Left cardiac atrium (tissue), 4 donors: ENCODE measurements at regions of chr3 and their contacts with region 1.

Region 1: DNA sequence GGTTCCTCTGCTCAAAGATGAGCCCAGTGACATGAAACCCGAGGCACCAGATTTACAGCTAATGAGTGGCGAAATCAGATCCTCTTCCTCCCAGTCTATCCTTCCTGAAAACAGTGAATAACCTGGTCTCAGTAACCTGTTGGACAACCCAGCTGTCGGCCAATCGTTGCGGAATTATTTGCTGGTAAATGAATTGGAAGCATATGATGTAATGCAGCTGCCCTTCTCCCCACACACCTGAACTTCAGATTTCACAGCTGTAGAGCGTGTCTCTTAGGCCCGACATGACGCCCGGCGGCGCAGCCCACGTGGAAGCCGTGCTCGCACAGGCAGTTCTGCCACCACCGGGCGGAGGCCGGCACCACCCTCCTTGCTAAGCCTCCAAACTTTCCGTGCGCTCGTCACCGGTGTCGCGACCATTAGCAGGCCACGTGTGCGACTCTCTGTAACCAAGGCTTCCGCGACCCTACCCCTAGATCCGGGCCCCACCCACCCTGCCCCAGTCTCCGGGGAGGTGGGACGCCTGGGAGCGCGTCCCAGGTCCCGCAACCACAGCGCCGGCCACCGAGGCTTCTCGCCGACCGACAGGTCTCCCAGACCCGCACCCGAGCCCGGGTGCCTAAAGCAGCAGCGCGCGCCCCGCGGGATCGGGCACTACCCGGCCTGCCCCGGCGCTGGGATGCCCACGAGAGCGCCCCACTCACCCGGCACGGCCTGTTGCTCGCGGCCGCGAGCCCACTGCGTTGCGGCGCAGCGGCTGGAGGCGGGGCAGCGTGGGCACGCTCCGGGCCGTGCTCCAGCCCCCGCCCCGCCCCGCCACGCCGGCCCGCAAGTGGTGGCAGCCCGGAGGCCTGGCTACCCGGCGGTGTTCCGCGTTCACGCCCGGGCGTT is at the start of gene RIOX2:
- DNase-seq: peak; percentile 83
- ATAC-seq: peak; percentile 98 to 99
- total RNA-seq, gene RIOX2: 12.9 to 16.0 TPM

Region 2: GRCh38 chr3:97421565-97421964 is 550.4 kb before region 1 on chr3:
- intact Hi-C with region 1: no loop called
- DNase-seq: no peak
- ATAC-seq: no peak

Region 3: DNA sequence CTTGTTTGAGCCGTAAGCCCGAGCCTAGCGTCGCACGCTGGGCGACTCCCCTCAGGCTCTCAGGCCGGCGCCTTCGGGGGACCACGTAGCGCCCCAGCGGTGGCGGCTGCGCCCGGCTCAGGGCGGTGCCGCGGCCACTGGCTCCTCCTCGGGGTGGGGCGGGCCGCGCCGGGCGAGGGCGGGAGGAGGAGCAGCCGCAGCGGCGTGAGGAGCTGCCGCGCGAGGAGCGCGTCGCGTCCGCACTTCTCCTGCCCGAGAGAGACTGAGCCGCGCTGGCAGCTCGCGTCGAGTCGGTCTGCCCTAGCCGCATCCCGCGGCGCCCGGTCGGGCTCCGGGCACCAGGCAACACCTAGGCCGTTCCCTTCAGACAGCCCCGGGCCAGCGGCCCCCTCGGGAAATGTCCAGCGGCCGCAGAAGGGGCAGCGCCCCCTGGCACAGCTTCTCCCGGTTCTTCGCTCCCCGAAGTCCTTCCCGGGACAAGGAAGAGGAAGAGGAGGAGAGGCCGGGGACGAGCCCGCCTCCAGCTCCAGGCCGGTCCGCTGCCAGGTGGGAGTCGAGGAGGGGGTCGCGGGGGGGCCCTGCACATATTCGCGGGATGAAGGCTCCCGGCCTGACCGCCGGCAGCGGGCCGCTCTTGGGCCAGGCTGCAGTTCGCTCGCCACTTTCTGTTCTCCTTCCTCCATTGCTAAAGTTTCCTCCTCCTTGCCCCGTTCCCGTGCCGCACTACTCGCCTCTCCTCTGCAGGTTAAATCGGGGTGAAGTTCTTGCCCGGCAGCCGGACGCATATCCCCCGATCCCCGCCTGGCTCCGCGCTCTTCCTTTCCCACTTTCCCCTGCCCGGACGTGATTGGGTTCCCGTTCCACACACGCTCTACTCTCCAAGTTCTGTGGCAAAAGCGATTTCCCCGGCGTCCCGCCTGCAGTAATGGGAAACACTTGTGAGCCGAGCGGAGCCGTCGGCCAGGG is 149.8 kb before region 1 on chr3 and contains the start of gene CRYBG3:
- intact Hi-C with region 1: loop called in 1 of 2 experiments (anchors 2 kb)
- DNase-seq: peak; percentile 89
- ATAC-seq: peak; percentile 97 to 99
- total RNA-seq, gene CRYBG3: 18.3 to 23.9 TPM

Region 4: GRCh38 chr3:98022978-98023820 is 51.3 kb after region 1 on chr3:
- intact Hi-C with region 1: loop called in 1 of 2 experiments (anchors 5 kb)
- DNase-seq: peak; percentile 92
- ATAC-seq: peak; percentile 85 to 87